Sigmoid colon (tissue), 7 donors: ENCODE measurements at regions of chr17 and their contacts with region 1.

Region 1: DNA sequence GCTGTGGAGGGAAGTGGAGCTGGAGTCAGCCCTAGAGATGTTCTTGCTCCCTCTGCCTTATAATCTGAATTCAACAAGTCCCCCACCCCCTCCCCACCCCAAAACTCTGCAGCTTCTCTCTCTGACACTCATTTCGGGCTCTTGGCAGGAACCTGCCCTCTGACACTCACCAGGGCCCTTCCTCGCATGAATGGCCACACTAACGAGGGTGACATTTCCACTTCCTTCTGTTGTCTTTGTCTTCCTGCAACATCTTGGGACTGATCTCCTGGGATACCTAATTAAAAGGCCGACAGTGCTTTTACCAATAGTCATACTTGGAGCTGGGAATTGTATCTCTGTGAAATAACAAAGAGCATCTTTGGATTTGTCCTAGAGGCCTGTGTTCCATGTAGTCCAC is 106.9 kb upstream of the PIRT start:
- DNase-seq: no peak
- H3K4me3 ChIP-seq: no peak overlapping the region
- H3K27ac ChIP-seq: no peak overlapping the region
- H3K4me1 ChIP-seq: no peaks in the 10 kb centered on the region
- H3K27me3 ChIP-seq: no peaks in the 10 kb centered on the region
- CTCF ChIP-seq: no peak
- EP300 ChIP-seq: no peak
- POLR2A ChIP-seq: no peak

Region 2: DNA sequence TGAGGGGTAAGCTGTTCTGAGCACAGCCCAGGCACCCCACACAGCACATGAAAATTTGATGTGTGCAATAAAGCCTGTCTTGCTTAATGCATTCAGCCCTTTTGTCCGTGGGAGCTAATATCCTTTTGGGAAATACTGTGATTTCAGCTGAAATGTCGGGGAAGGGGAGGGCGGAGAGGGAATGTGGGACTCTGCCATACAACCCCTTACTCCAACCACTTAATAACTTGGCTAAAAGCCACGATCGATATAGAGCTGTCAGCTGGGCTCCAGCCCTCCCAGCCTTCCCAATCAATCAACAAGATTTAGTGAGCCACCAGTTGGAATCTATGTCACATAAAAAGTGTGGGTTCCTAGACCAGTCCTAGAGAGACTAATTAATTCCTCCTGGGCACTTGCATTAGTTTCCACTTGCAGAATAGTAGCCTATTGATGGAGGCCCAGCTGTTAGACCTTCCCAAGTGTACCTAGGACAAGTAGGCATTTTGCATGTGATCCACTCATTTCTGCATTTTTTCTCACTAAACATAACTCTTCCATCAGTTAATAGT is 24.2 kb before region 1 on chr17:
- intact Hi-C with region 1: no loop called
- DNase-seq: no peak
- H3K4me3 ChIP-seq: no peak overlapping the region
- H3K27ac ChIP-seq: no peak overlapping the region
- H3K4me1 ChIP-seq: no peaks in the 10 kb centered on the region
- H3K27me3 ChIP-seq: no peaks in the 10 kb centered on the region
- CTCF ChIP-seq: no peak
- EP300 ChIP-seq: no peak
- POLR2A ChIP-seq: no peak

Region 3: GRCh38 chr17:11006530-11006929 is 61.7 kb after region 1 on chr17:
- intact Hi-C with region 1: loop called (anchors 10 kb)
- DNase-seq: no peak
- H3K4me3 ChIP-seq: no peak overlapping the region
- H3K27ac ChIP-seq: no peak overlapping the region
- H3K4me1 ChIP-seq: no peaks in the 10 kb centered on the region
- H3K27me3 ChIP-seq: no peaks in the 10 kb centered on the region
- CTCF ChIP-seq: no peak
- EP300 ChIP-seq: no peak
- POLR2A ChIP-seq: no peak

Region 4: DNA sequence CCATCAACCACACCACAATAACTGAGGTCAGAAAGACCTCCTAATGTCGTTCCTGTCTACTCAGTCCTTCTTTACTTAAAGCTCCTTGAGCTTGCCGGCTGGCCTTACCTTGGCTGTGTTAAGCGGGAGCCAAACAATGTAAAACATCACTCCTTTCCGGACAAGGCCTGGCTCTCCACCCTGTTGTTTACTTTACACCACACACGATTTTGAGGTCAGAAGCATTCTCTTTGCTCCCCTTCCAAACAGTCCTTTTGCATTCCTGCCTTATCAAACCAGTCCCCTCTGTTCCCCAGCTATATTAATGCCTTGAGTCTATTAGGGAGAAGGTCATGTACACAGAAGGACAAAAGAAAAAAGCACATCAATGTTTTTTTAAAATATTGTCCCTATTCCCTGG is 276.9 kb after region 1 on chr17:
- intact Hi-C with region 1: no loop called
- DNase-seq: no peak
- H3K4me3 ChIP-seq: no peak overlapping the region
- H3K27ac ChIP-seq: no peak overlapping the region
- H3K4me1 ChIP-seq: no peaks in the 10 kb centered on the region
- H3K27me3 ChIP-seq: no peaks in the 10 kb centered on the region
- CTCF ChIP-seq: no peak
- EP300 ChIP-seq: no peak
- POLR2A ChIP-seq: no peak